ENCODE measurements at regions of chr6 and their contacts with region 1.

Region 1: GRCh38 chr6:108805611-108806167 is 42.5 kb upstream of the ARMC2 start:
- DNase-seq: peak; percentile 32
- CTCF ChIP-seq: no peak

Region 2: DNA sequence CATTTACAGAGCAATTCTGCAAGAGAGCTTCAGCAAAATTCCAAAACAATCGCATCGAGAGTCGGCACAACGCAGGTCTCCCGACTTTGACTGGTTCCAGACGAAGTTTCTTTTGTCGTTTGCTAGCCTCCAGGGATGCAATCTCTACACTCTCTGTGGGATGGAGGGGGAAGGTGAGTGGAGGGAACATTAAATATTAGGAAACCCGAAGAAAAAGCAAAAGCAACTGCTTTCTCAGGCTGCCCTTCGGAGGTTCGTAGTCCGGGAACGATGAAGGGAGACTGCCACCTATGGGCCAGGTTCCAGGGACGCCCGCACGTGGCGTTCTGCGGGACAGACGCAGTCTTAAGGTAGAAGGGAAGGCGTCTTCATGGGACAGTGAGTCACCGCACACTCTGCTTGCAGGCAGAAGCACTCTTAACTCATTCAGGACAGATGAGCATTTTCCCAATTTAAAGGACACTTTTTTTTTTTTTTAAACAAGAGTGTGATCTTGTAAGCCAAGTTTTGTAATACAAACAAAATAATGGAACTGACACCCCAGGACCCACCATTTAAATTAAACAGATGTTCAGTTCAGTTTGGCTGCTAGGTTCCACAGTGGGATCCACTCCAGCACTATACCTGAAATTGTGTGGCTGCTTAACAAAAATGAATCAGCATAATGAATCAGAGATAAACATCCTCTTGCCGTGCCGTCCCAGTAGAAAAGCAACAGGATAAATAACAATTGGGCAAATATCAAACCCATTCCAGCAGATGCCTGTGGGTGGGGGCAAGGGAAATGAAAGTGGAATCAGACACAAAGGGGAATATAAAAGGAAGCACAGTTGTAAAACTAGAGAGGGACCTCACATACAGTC is 23.3 kb before region 1 on chr6:
- CTCF ChIA-PET with region 1: interaction called, 11 read pairs
- POLR2A ChIA-PET with region 1: no interaction called
- DNase-seq: peak; percentile 72
- CTCF ChIP-seq: peak; percentile 74